ENCODE measurements at regions of chr12 and their contacts with region 1.

Region 1: DNA sequence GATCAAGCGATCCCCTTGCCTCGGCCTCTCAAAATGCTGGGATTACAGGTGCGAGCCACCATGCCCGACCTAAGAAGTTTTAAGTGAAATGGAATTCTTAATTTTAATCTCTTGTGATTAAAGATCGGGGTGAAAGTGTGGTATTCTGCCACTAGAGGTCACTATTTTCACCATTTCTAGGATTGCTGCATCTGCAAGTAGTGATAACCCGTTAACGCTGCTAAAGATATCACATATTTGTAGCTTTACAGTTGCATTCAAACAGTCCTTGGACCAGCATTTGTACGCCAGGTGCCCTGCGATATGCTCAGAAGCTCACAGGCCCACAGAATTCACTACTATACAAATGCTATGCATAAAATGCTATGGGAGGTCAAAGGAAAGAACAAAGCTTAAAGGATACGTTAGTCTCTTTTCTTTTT is 19.3 kb downstream of the CCDC62 start:
- DNase-seq: peak in 1 of 6 donors; percentile 25
- ATAC-seq: peak; percentile 78 to 86 (median 83)
- H3K4me3 ChIP-seq: no peak overlapping the region
- H3K27ac ChIP-seq: no peak overlapping the region
- H3K4me1 ChIP-seq: no peaks in the 10 kb centered on the region
- H3K27me3 ChIP-seq: no peaks in the 10 kb centered on the region
- CTCF ChIP-seq: peak; percentile 35 to 70 (median 64)

Region 2: GRCh38 chr12:122841544-122842321 is 48.0 kb after region 1 on chr12:
- intact Hi-C with region 1: loop called in 1 of 3 experiments (anchors 10 kb)
- DNase-seq: peak in 2 of 6 donors; percentile 58 to 64
- ATAC-seq: peak; percentile 18 to 60 (median 26)
- H3K4me3 ChIP-seq: no peak overlapping the region
- H3K27ac ChIP-seq: peak overlapping the region; percentile 28 to 93 (median 60)
- H3K4me1 ChIP-seq: peaks cover 52 to 72% (median 54%) of the 10 kb centered on the region in 3 donors
- H3K27me3 ChIP-seq: no peaks in the 10 kb centered on the region
- CTCF ChIP-seq: no peak

Region 3: DNA sequence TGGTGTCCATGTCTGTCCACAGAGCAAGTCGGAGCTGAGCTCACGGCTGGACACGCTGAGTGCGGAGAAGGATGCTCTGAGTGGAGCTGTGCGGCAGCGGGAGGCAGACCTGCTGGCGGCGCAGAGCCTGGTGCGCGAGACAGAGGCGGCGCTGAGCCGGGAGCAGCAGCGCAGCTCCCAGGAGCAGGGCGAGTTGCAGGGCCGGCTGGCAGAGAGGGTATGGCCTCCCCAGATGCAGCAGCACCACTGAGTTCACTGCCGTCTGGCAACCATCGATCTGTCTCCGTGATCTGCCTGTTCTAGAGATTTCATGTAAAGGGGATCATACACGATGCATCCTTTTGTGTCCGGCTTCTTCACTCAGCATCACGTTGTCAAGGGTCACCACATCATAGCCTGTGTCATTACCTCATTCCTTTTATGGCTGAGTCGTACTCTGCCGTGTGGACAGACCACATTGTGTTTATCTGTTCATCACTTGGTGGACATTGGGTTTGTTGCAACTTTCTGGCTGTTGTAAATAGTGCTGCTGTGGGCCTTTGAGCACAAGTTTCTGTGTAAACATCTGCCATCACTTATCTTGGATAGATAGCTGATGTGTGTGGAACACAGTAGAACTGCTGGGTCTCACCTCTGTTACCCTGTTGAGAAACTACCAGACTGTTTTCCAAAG is 63.4 kb after region 1 on chr12:
- intact Hi-C with region 1: no loop called
- DNase-seq: peak in 1 of 6 donors; percentile 64
- ATAC-seq: no peak
- H3K4me3 ChIP-seq: no peak overlapping the region
- H3K27ac ChIP-seq: no peak overlapping the region
- H3K4me1 ChIP-seq: peaks cover 0 to 6% (median 5%) of the 10 kb centered on the region in 3 donors
- H3K27me3 ChIP-seq: no peaks in the 10 kb centered on the region
- CTCF ChIP-seq: no peak